Activated CD8-positive, alpha-beta T cell treated with anti-CD3 and anti-CD28 coated beads for 36 hours (primary cell): ENCODE measurements at regions of chr3 and their contacts with region 1.

Region 1: DNA sequence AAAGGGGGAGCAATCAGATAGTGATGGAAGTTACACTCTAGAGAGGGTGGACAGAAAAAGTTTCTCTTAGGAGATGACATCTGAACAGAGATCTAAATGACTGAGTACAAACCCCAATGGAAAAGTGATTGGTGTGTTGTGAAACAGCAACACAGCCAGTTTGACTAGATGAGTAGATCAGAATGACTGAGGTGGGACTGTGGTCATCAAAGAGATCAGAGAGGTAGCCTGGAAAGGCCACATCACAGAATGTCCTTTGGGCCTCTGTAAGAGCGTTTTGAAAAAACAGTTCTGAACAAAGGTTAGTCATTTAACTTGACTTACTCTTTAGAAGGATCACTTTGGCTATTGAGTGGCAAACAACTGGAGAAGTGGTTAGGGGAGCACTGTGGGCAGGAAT is 10.6 kb downstream of the LRRC58 start:
- DNase-seq: peak; percentile 40
- ATAC-seq: peak; percentile 90
- H3K4me3 Mint-ChIP-seq: no peak overlapping the region
- H3K27ac Mint-ChIP-seq: peak overlapping the region; percentile 27
- H3K4me1 Mint-ChIP-seq: peaks cover 43% of the 10 kb centered on the region
- H3K27me3 Mint-ChIP-seq: no peaks in the 10 kb centered on the region
- CTCF ChIP-seq: no peak

Region 2: DNA sequence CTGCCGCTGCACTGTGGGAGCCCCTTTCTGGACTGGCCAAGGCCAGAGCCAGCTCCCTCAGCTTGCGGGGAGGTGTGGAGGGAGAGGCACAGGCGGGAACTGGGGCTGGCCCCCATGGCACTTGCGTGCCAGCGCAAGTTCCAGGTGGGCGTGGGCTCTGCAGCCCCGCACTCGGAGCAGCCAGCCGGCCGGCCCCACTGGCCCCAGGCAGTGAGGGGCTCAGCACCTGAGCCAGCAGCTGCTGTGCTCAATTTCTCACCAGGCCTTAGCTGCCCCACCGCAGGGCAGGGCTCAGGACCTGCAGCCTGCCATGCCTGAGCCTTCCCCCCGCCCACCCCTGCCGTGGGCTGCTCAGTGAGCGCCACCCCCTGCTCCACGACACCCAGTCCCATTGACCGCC is 48.9 kb before region 1 on chr3:
- CTCF ChIA-PET with region 1: no interaction called
- POLR2A ChIA-PET with region 1: no interaction called
- intact Hi-C with region 1: loop called (anchors 2 kb)
- DNase-seq: no peak
- ATAC-seq: no peak
- H3K4me3 Mint-ChIP-seq: no peak overlapping the region
- H3K27ac Mint-ChIP-seq: no peak overlapping the region
- H3K4me1 Mint-ChIP-seq: peaks cover 8% of the 10 kb centered on the region
- H3K27me3 Mint-ChIP-seq: peaks cover 36% of the 10 kb centered on the region
- CTCF ChIP-seq: no peak

Region 3: GRCh38 chr3:120699333-120699732 is 360.8 kb after region 1 on chr3:
- CTCF ChIA-PET with region 1: no interaction called
- POLR2A ChIA-PET with region 1: no interaction called
- intact Hi-C with region 1: no loop called
- DNase-seq: no peak
- ATAC-seq: no peak
- H3K4me3 Mint-ChIP-seq: no peak overlapping the region
- H3K27ac Mint-ChIP-seq: no peak overlapping the region
- H3K4me1 Mint-ChIP-seq: no peaks in the 10 kb centered on the region
- H3K27me3 Mint-ChIP-seq: no peaks in the 10 kb centered on the region
- CTCF ChIP-seq: no peak